ENCODE measurements at regions of chr9 and their contacts with region 1.

Region 1: DNA sequence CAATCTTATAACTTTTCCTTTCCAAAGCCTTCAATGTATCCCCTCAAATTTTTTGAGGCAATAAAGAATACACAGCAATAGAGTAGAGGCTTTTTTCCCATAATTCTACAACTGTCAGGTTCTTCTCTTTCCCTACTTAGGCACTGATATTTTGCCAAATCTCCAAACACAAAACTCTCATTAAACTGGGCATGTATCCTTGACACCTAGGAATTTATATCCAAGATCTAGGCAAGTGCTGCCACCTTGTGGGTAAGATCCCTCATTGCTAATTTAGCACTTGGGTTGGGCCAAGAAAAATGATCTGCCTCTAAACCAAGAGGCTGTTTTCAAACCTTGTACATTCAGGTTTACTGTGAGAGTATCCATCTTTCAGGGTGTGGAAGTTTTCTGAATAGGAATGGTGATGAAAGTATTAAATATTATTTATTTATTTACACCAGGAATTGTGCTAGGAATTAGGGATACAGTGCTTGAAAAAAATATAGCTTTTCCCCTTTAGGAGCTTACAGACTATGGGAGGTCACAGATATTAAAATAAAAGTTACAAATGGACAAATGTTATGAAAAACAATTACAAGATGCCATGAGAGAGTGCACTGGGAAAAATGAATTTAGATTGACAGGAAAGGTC is 17.6 kb downstream of the TSTD2 start:
- DNase-seq: peak; percentile 18
- ATAC-seq: peak; percentile 71; the same call in 1 of the 2 replicates
- H3K4me3 ChIP-seq: no peak overlapping the region
- H3K27ac ChIP-seq: no peak overlapping the region
- H3K4me1 ChIP-seq: no peaks in the 10 kb centered on the region
- H3K27me3 ChIP-seq: no peaks in the 10 kb centered on the region
- CTCF ChIP-seq: peak; percentile 68; the same call in 1 of the 2 replicates

Region 2: DNA sequence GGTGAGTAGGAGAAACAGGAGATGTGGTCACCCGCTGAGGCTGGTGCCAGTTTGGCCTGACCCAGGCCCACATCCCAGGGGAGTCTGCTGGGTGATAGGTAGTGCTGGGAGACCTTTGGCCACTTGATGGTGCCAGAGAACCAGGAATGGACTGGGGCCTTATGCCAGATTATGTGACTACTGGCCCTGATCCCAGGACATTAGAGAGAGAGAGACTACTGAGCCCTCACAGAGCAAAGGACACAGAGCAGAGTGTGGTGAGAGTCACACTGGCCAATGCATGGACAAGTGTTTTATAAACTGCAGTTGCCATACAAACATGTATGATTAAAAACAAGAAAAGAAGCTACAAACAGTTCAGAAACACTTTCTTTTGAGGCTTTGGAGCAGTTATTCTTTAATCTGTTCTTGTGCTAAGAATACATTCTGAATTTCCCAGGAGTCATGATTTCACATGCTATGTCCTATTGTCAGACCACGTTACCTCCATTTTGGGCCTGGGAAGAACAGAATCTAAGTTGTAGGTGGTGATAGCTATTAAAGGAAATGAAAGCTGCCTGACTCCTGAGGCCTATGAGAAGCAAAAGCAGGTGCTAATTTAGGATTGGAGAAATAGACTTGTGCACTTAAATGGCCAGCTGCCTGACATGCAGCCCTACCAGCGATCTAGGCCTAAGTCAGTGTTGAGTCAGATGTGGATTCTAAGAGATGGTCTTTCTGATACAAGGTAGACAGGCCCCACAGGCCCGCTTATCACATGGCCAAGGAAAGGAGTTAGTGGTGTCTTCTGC is 146.7 kb before region 1 on chr9:
- CTCF ChIA-PET with region 1: interaction called, 3 read pairs
- POLR2A ChIA-PET with region 1: no interaction called
- in situ Hi-C with region 1: no loop called
- intact Hi-C with region 1: loop called (anchors 5 kb)
- DNase-seq: peak; percentile 39
- ATAC-seq: peak; percentile 90
- H3K4me3 ChIP-seq: no peak overlapping the region
- H3K27ac ChIP-seq: no peak overlapping the region
- H3K4me1 ChIP-seq: no peaks in the 10 kb centered on the region
- H3K27me3 ChIP-seq: no peaks in the 10 kb centered on the region
- CTCF ChIP-seq: peak; percentile 70